Activated naive CD4-positive, alpha-beta T cell treated with anti-CD3 and anti-CD28 coated beads for 36 hours (primary cell): ENCODE measurements at regions of chr3 and their contacts with region 1.

Region 1: GRCh38 chr3:151156618-151157216 is 46.3 kb downstream of the GPR171 start:
- DNase-seq: peak; percentile 61
- H3K4me3 Mint-ChIP-seq: no peak overlapping the region
- H3K27ac Mint-ChIP-seq: no peak overlapping the region
- H3K4me1 Mint-ChIP-seq: no peaks in the 10 kb centered on the region
- H3K27me3 Mint-ChIP-seq: no peaks in the 10 kb centered on the region

Region 2: DNA sequence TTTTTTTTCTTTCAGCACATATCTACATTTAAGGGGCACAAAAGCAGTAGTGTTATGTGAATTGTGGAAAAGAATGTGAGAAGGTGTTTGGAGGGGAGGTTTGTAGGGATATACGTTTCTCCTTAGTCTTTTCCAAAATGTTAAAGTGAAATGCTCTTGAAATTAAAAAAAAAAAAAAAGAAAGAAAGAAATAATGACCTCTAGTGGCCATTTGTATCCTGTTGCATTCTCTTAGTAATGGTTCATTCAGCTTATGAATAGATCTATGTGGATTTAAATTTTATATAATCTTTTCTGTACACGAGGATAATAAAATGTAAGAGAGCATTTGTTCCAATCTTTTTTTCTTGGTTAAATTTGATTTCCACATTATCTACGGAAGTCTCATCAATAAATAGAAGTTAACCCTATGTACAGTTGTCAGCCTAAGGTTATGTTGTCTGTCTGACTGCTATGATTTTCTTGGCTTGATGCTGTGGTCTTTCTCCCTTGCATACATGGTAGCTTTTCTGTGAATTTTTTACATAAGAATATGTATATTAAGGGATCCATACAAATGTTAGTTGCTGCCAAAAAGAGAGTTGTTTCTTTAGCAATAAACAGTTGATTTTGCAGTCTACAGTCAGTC is 171.0 kb after region 1 on chr3:
- CTCF ChIA-PET with region 1: interaction called, 13 read pairs
- intact Hi-C with region 1: loop called (anchors 2 kb)
- DNase-seq: no peak
- H3K4me3 Mint-ChIP-seq: no peak overlapping the region
- H3K27ac Mint-ChIP-seq: no peak overlapping the region
- H3K4me1 Mint-ChIP-seq: peaks cover 7% of the 10 kb centered on the region
- H3K27me3 Mint-ChIP-seq: peaks cover 4% of the 10 kb centered on the region